Dorsolateral prefrontal cortex (tissue), 120 donors: ENCODE measurements at regions of chr22 and their contacts with region 1.

Region 1: GRCh38 chr22:42993651-42994275 is 21.2 kb downstream of the PACSIN2 start:
- DNase-seq: no peak
- H3K4me3 ChIP-seq: no peak overlapping the region
- H3K27ac ChIP-seq: peak overlapping the region in 13 of 59 donors; percentile 30 to 72 (median 65)
- H3K27me3 ChIP-seq: no peaks in the 10 kb centered on the region
- CTCF ChIP-seq: no peak

Region 2: GRCh38 chr22:42976217-42976933 is 17.4 kb before region 1 on chr22:
- intact Hi-C with region 1: loop called in 1 of 2 experiments (anchors 1 kb)
- DNase-seq: no peak
- H3K4me3 ChIP-seq: no peak overlapping the region
- H3K27ac ChIP-seq: no peak overlapping the region
- H3K27me3 ChIP-seq: no peaks in the 10 kb centered on the region
- CTCF ChIP-seq: no peak